ENCODE measurements at regions of chr12 and their contacts with region 1.

Region 1: DNA sequence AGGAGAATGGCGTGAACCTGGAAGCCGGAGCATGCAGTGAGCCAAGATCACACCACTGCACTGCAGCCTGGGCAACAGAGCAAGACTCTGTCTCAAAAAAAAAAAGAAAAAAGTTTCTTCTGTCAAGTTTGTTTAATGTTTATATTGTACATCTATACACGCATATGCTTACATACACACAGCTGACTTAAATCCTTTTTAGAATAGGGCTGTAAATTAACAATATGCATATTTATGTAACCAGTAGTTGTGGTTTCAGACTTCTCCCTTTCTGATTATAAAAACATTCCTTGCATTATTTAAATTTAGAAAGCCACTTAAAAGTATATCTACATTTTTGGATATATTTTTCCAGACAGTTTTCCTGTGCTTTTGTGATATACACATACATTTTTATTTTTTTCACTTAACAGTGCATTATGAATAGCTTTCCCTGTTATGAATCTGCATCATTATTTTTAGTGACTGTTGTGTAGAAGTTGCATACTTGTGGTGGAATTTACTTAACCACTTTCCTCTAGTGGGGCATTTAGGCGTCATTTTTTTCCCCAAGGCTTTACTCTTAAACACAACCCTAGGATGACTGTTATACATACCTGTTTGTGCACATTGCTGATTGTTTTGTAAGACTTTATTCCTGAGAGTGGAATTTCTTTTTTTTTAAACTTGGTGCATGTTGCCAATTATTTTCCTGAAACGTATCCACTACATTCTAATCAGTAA is 29.4 kb downstream of the POLR3B start:
- DNase-seq: no peak
- H3K4me3 Mint-ChIP-seq: no peak overlapping the region
- H3K27ac Mint-ChIP-seq: no peak overlapping the region
- H3K4me1 Mint-ChIP-seq: no peaks in the 10 kb centered on the region
- H3K27me3 Mint-ChIP-seq: no peaks in the 10 kb centered on the region

Region 2: GRCh38 chr12:105420659-105421240 is 966.2 kb before region 1 on chr12:
- CTCF ChIA-PET with region 1: no interaction called
- intact Hi-C with region 1: no loop called
- DNase-seq: peak; percentile 84
- H3K4me3 Mint-ChIP-seq: no peak overlapping the region
- H3K27ac Mint-ChIP-seq: no peak overlapping the region
- H3K4me1 Mint-ChIP-seq: peaks cover 10% of the 10 kb centered on the region
- H3K27me3 Mint-ChIP-seq: no peaks in the 10 kb centered on the region

Region 3: GRCh38 chr12:106302401-106303201 is 84.4 kb before region 1 on chr12 and contains the start of gene TCP11L2:
- CTCF ChIA-PET with region 1: no interaction called
- intact Hi-C with region 1: no loop called
- DNase-seq: peak; percentile 88
- H3K4me3 Mint-ChIP-seq: peak within 1 kb of the TSS; percentile 93
- H3K27ac Mint-ChIP-seq: peak within 1 kb of the TSS; percentile 99
- H3K4me1 Mint-ChIP-seq: peaks cover 55% of the 10 kb centered on the region
- H3K27me3 Mint-ChIP-seq: no peaks in the 10 kb centered on the region
- total RNA-seq, gene TCP11L2: 9.2 to 10.3 TPM

Region 4: GRCh38 chr12:106364261-106364660 is 22.7 kb before region 1 on chr12:
- CTCF ChIA-PET with region 1: no interaction called
- intact Hi-C with region 1: no loop called
- DNase-seq: no peak
- H3K4me3 Mint-ChIP-seq: no peak overlapping the region
- H3K27ac Mint-ChIP-seq: no peak overlapping the region
- H3K4me1 Mint-ChIP-seq: peaks cover 2% of the 10 kb centered on the region
- H3K27me3 Mint-ChIP-seq: no peaks in the 10 kb centered on the region

Region 5: DNA sequence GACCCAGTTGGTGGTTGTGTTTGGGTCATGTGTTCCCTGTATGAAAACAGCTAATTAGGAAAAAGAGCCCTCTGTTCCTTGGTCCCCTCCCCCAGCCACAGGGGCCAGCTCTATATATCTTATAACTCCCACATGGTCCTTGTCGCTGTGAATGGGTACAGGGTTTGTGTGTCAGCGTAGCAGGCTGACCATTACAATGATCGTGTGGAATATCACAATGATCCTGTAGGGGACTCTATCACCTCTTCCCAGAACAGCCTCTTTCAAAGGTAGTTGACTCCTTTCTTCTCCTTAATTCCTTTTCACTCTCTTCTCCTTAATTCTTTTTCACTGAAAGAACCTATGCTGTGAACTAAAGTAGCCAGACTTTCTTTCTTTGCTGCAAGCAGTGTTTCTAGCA is 335.9 kb after region 1 on chr12:
- CTCF ChIA-PET with region 1: no interaction called
- intact Hi-C with region 1: loop called (anchors 10 kb)
- DNase-seq: no peak
- H3K4me3 Mint-ChIP-seq: no peak overlapping the region
- H3K27ac Mint-ChIP-seq: no peak overlapping the region
- H3K4me1 Mint-ChIP-seq: peaks cover 2% of the 10 kb centered on the region
- H3K27me3 Mint-ChIP-seq: no peaks in the 10 kb centered on the region

Region 6: GRCh38 chr12:107105410-107105703 is 718.4 kb after region 1 on chr12:
- CTCF ChIA-PET with region 1: no interaction called
- intact Hi-C with region 1: loop called (anchors 1 kb)
- DNase-seq: no peak
- H3K4me3 Mint-ChIP-seq: no peak overlapping the region
- H3K27ac Mint-ChIP-seq: no peak overlapping the region
- H3K4me1 Mint-ChIP-seq: no peaks in the 10 kb centered on the region
- H3K27me3 Mint-ChIP-seq: peaks cover 3% of the 10 kb centered on the region